Activated CD4-positive, alpha-beta T cell treated with anti-CD3 and anti-CD28 coated beads for 36 hours (primary cell): ENCODE measurements at regions of chr4 and their contacts with region 1.

Region 1: GRCh38 chr4:122508083-122508482 is 51.6 kb upstream of the IL2 start:
- DNase-seq: no peak
- ATAC-seq: peak; percentile 77
- H3K4me3 Mint-ChIP-seq: peak overlapping the region; percentile 64
- H3K27ac Mint-ChIP-seq: peak overlapping the region; percentile 92
- H3K4me1 Mint-ChIP-seq: peaks cover 84% of the 10 kb centered on the region
- H3K27me3 Mint-ChIP-seq: peaks cover 2% of the 10 kb centered on the region

Region 2: DNA sequence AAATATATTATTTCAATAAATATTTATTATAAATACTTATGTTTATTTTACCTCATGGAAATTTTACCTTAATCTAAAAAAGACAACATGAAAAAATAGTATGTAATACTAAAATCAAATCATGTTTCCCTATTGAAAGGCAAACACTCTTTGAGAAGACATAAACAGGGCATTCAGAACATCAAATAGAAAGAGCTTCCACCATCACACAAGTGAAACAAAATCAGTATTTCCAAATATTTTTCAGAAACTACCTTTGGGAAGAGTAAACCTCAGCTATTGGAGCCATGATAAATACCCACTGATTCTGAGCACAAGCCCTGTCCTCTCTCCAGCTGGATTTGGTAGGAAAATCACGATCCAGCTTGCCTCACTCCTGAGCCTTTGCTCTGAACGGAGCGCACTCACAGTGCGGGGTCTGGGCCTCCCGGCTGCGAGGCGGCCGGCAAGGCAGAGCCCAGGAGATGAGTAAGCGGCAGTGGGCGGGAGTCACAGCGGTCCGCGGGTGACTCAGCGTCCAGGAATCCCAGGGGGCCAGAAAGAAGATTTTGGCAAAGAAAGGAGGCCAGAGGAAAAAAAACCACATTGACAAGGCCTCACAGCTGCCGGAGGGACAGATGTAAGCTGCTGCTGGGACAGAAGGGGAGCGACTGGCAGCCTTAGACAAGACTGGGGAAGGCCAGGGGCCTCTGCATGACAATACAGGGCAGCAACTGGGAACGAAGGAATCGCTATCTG is 796.7 kb before region 1 on chr4:
- CTCF ChIA-PET with region 1: no interaction called
- POLR2A ChIA-PET with region 1: no interaction called
- intact Hi-C with region 1: no loop called
- DNase-seq: peak; percentile 74
- ATAC-seq: peak; percentile 40
- H3K4me3 Mint-ChIP-seq: no peak overlapping the region
- H3K27ac Mint-ChIP-seq: no peak overlapping the region
- H3K4me1 Mint-ChIP-seq: peaks cover 29% of the 10 kb centered on the region
- H3K27me3 Mint-ChIP-seq: peaks cover 40% of the 10 kb centered on the region

Region 3: DNA sequence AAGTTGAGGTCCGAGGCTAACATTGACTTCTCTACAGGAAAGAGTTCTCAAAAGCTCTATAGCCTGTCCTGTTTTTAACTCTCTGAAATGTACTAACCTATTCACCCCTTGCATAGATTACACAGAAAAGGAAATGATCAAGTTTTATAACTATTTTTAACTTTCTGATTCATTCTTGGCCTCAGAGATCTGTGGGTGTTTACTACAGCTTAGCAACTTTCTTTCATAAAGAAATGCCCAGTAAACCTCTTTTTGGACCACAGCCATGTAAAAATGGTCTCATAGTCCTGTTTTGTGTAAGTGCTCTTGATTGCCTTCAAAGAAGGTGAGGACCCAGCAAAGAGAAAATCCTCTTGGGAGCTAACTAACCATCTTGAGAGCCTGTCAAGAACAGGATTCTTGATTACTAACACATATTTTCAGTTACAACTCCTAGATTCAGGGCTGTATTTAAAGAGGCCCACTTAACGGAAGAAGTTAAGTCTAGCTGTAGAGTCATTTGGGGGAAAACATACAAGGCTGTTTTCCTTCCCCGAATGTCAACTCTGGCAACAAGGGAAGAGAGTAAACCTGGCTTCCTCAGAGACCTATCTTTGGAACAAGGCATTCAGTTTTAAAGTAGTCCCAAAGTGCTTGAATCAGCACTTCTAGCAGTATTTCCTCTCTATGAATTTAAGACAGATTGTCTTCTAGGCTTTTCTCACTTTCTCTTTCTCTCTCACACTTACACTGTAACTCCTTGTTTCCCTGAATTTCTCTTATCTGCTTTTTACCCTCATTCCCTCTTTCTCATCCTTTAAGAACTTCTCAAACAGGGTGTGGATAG is 34.5 kb after region 1 on chr4:
- CTCF ChIA-PET with region 1: interaction called, 7 read pairs
- POLR2A ChIA-PET with region 1: interaction called, 6 read pairs
- intact Hi-C with region 1: loop called (anchors 1 kb)
- DNase-seq: no peak
- ATAC-seq: peak; percentile 63
- H3K4me3 Mint-ChIP-seq: peak overlapping the region; percentile 53
- H3K27ac Mint-ChIP-seq: peak overlapping the region; percentile 95
- H3K4me1 Mint-ChIP-seq: peaks cover 94% of the 10 kb centered on the region
- H3K27me3 Mint-ChIP-seq: no peaks in the 10 kb centered on the region

Region 4: GRCh38 chr4:122658818-122659295 is 150.8 kb after region 1 on chr4:
- CTCF ChIA-PET with region 1: no interaction called
- POLR2A ChIA-PET with region 1: no interaction called
- intact Hi-C with region 1: loop called in 1 of 2 experiments (anchors 5 kb)
- DNase-seq: no peak
- ATAC-seq: peak; percentile 86
- H3K4me3 Mint-ChIP-seq: peak overlapping the region; percentile 42
- H3K27ac Mint-ChIP-seq: peak overlapping the region; percentile 98
- H3K4me1 Mint-ChIP-seq: peaks cover 61% of the 10 kb centered on the region
- H3K27me3 Mint-ChIP-seq: no peaks in the 10 kb centered on the region

Region 5: DNA sequence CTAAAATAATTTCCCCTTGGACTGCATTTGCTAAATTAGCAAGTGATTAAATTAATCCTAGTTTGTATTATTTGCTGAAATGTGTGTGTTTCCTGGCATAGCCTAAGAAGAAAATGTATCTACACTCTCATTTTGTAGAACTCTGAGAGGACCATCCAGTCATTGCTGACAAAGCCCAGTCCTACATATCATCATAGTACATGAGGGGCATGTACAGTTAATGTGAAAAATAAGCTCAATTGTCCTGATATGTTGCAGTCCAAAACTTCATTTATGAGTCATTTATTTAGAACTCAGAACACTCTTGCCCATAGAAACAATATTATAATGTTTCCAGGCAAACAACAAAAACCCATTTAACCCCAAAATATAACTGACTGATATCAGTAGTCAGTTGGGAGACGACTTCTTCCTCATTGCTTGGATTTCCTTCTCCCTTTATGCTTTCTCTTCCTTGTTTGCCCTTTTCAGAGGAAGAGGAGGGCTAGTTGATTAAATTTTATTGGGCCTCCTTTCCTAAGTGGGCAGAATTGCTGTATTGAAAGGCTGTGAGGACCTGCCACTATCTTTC is 197.5 kb after region 1 on chr4:
- CTCF ChIA-PET with region 1: no interaction called
- POLR2A ChIA-PET with region 1: interaction called, 3 read pairs
- intact Hi-C with region 1: loop called (anchors 2 to 5 kb)
- DNase-seq: no peak
- ATAC-seq: peak; percentile 34
- H3K4me3 Mint-ChIP-seq: peak overlapping the region; percentile 67
- H3K27ac Mint-ChIP-seq: peak overlapping the region; percentile 84
- H3K4me1 Mint-ChIP-seq: peaks cover 81% of the 10 kb centered on the region
- H3K27me3 Mint-ChIP-seq: no peaks in the 10 kb centered on the region